ENCODE measurements at regions of chr4 and their contacts with region 1.

Region 1: GRCh38 chr4:123421227-123421936 is 24.8 kb downstream of the SPRY1 start:
- DNase-seq: no peak
- H3K4me3 Mint-ChIP-seq: peak overlapping the region; percentile 9
- H3K27ac Mint-ChIP-seq: peak overlapping the region; percentile 91
- H3K4me1 Mint-ChIP-seq: peaks cover 39% of the 10 kb centered on the region
- H3K27me3 Mint-ChIP-seq: no peaks in the 10 kb centered on the region

Region 2: DNA sequence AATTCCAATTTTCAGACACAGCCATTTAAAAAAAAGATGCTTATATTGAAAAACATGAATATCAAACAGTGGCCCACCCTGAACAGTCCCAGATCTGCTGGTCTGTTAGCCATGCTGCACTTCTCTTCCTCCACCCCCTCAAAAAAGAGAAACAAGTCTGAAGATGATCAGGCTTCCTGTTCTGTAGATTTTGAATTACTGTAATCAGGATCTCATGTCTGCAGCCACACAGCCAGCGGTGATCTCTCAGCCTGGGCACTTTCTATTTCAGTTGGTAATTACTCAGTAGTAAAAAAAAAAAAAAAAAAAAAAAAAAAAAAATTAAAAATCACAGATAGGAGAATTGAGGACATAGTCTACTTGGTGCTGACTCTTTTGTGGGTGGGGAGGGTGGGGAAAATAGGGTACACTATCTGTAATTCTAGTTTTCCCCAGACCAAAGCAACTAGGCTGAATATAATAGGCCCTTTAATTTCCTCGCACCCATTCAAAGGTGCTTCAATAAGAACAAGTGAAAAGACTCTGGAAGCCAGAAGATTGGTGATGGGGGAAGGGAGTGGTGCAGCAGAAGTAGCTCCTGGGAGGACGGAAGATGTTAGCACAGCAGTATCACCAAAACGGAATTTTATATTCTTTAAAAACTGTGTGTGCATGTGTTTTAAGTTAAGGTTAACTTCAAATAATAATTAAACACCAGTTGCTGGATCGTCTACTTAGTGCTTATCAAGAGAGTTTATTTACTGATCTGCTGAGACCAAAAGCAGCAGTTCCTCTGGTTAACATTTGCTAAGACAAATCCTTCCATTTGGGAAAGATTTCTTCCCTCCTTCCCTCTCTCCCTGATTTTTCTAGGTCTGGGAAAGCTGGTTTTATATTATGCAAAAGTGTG is 22.3 kb after region 1 on chr4:
- CTCF ChIA-PET with region 1: no interaction called
- intact Hi-C with region 1: loop called (anchors 1 kb)
- DNase-seq: peak; percentile 65
- H3K4me3 Mint-ChIP-seq: peak overlapping the region; percentile 37
- H3K27ac Mint-ChIP-seq: peak overlapping the region; percentile 74
- H3K4me1 Mint-ChIP-seq: peaks cover 16% of the 10 kb centered on the region
- H3K27me3 Mint-ChIP-seq: peaks cover 2% of the 10 kb centered on the region

Region 3: GRCh38 chr4:123477711-123478209 is 56.4 kb after region 1 on chr4:
- CTCF ChIA-PET with region 1: no interaction called
- intact Hi-C with region 1: loop called (anchors 2 kb)
- DNase-seq: peak; percentile 83
- H3K4me3 Mint-ChIP-seq: no peak overlapping the region
- H3K27ac Mint-ChIP-seq: no peak overlapping the region
- H3K4me1 Mint-ChIP-seq: peaks cover 25% of the 10 kb centered on the region
- H3K27me3 Mint-ChIP-seq: peaks cover 2% of the 10 kb centered on the region

Region 4: GRCh38 chr4:123524958-123525628 is 103.7 kb after region 1 on chr4:
- CTCF ChIA-PET with region 1: no interaction called
- intact Hi-C with region 1: no loop called
- DNase-seq: no peak
- H3K4me3 Mint-ChIP-seq: no peak overlapping the region
- H3K27ac Mint-ChIP-seq: no peak overlapping the region
- H3K4me1 Mint-ChIP-seq: peaks cover 4% of the 10 kb centered on the region
- H3K27me3 Mint-ChIP-seq: peaks cover 4% of the 10 kb centered on the region

Measured in activated naive CD4-positive, alpha-beta T cell treated with anti-CD3 and anti-CD28 coated beads for 36 hours (primary cell).